ENCODE measurements at regions of chr19 and their contacts with region 1.

Region 1: GRCh38 chr19:34336781-34337271 is 28.2 kb upstream of the GPI start:
- DNase-seq: no peak
- ATAC-seq: peak; percentile 66
- H3K4me3 ChIP-seq: no peak overlapping the region
- H3K27ac ChIP-seq: no peak overlapping the region
- H3K4me1 ChIP-seq: no peaks in the 10 kb centered on the region
- H3K27me3 ChIP-seq: no peaks in the 10 kb centered on the region
- CTCF ChIP-seq: peak; percentile 30 to 47

Region 2: DNA sequence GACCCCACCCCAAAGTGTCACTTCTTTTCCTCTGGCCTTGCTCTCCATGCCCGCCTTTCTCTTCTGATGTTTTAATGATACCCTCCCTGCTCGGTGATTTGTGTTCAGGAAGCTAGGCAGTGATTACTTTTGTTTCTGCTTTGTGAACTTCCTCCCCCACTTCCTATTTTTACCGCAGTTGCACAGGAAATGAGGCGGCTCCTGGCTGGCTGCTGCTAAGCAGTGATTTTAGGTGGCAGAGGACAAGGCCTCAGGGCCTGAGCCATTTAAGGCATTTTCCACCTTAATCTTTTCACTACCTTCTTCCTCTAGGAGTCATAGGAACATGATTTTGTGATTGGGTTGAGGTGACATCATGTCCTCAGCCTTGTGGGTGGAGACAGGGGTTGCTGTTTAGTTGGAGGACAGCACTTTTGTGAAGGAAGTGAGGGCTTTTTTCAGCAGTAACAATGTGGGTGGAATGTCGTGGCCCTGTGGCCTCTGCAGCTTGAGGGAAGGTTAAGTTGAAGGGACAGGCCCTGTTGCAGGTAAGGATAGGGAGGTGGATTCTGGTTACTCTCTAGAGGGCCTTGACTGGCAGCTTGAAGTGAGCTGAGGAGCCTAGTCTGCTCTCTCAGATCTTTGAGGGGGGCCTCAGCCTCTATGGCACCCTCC is 66.7 kb before region 1 on chr19:
- intact Hi-C with region 1: loop called in 1 of 2 experiments (anchors 10 kb)
- DNase-seq: peak in 3 of 4 donors; percentile 28 to 62 (median 57)
- ATAC-seq: peak; percentile 73
- H3K4me3 ChIP-seq: no peak overlapping the region
- H3K27ac ChIP-seq: peak overlapping the region; percentile 79 to 86
- H3K4me1 ChIP-seq: peaks cover 21 to 53% of the 10 kb centered on the region in 2 donors
- H3K27me3 ChIP-seq: no peaks in the 10 kb centered on the region
- CTCF ChIP-seq: no peak